Prostate gland (tissue), 2 donors: ENCODE measurements at regions of chr12 and their contacts with region 1.

Region 1: DNA sequence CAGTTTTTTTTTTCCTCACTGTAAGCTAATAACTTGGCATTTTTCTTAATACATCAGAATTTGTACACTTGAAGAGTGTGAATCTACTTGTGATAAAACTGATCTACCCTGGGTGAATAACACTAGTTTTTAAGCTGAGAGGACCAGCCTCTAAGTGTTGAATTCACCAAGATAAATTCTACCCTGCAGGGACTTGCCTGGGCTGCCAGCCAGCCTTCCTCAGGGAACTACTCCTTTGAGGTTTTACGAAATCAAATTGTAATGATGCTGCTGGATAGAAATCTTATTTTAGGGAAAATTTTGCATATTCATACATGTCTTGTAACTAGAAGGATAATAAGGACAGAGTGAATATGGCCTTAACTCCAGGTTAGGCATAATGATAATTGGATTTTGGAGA is 1.9 kb downstream of the MED21 start:
- DNase-seq: no peak
- H3K4me3 ChIP-seq: no peak overlapping the region
- H3K27ac ChIP-seq: no peak overlapping the region
- H3K4me1 ChIP-seq: no peaks in the 10 kb centered on the region
- H3K27me3 ChIP-seq: no peaks in the 10 kb centered on the region
- CTCF ChIP-seq: no peak
- POLR2A ChIP-seq: no peak

Region 2: DNA sequence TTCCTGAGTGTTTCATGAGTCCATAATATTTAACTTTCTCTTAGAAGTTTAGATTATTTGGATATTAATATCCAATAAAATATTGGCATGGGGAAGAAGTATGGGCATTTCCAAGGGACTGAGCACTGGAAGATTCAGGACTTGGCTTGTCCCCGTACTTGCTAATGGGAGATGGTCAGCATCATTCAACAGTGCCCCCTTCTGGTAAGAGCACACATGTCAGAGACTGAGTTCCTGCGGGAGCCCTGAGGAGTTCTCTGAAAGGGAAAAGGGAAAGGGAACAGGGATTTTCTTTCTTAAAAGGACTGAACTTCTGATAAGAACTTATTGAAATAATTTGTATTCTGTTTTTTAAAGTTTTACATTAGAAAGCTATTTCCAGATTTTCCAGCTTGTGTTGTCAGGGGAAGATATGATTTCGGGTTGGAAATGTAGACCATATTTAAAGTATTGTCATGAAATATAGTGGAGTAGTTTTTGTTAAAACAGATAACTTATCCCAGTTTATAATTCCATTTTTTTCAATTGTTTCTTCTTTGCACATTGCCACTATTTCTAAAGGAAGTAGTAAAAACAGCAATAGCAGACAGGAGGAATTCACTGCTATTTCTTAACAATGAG is 117.9 kb after region 1 on chr12:
- intact Hi-C with region 1: loop called (anchors 5 kb)
- DNase-seq: peak; percentile 55
- H3K4me3 ChIP-seq: no peak overlapping the region
- H3K27ac ChIP-seq: no peak overlapping the region
- H3K4me1 ChIP-seq: no peaks in the 10 kb centered on the region
- H3K27me3 ChIP-seq: no peaks in the 10 kb centered on the region
- CTCF ChIP-seq: peak; percentile 33 to 75 (median 60)
- POLR2A ChIP-seq: no peak

Region 3: GRCh38 chr12:27193854-27194544 is 169.7 kb after region 1 on chr12:
- intact Hi-C with region 1: loop called (anchors 5 kb)
- DNase-seq: peak; percentile 16
- H3K4me3 ChIP-seq: no peak overlapping the region
- H3K27ac ChIP-seq: peak overlapping the region; percentile 38
- H3K4me1 ChIP-seq: peaks cover 3% of the 10 kb centered on the region
- H3K27me3 ChIP-seq: no peaks in the 10 kb centered on the region
- CTCF ChIP-seq: peak in 1 of 4 experiments; percentile 9
- POLR2A ChIP-seq: no peak

Region 4: DNA sequence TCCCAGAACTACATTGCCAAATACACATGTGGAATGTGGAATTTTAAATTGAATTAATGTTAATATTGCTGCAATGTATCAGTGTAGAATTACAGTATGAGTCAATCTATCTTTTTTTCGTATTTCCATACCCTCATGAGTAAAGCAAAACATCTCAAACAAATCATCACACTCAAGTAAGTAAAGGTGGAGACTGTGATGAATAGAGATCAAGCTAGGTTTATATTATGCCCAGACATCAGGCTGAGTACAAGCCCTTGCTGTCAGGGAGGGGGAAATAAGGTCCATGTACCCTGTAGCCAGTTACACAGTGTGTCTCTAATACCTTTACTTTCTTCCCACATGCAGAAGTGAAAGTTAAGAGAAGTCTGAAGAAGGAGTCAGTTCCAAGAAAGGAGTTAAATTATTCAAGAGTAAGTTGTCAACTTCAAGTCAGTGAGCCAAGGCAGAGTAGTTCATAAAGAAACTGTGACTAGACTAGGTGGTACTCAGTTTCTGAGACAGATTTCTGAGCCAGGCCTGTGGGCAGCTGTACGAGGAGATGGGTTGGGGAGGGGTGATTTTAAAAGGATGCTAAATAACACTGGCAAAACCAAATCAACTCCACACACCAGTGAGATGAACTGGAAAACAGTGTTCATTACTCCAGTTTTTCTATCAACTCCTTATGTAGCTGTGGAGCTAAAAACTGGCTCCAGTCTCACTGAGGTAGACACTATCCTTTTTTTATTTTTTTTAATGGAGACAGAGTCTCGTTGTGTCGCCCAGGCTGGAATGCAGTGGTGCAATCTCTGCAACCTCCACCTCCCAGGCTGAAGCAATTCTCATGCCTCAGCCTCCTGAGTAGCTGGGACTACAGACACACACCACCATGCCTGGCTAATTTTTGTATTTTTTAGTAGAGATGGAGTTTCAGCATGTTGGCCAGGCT is 196.0 kb after region 1 on chr12:
- intact Hi-C with region 1: no loop called
- DNase-seq: no peak
- H3K4me3 ChIP-seq: no peak overlapping the region
- H3K27ac ChIP-seq: no peak overlapping the region
- H3K4me1 ChIP-seq: no peaks in the 10 kb centered on the region
- H3K27me3 ChIP-seq: no peaks in the 10 kb centered on the region
- CTCF ChIP-seq: no peak
- POLR2A ChIP-seq: no peak

Region 5: DNA sequence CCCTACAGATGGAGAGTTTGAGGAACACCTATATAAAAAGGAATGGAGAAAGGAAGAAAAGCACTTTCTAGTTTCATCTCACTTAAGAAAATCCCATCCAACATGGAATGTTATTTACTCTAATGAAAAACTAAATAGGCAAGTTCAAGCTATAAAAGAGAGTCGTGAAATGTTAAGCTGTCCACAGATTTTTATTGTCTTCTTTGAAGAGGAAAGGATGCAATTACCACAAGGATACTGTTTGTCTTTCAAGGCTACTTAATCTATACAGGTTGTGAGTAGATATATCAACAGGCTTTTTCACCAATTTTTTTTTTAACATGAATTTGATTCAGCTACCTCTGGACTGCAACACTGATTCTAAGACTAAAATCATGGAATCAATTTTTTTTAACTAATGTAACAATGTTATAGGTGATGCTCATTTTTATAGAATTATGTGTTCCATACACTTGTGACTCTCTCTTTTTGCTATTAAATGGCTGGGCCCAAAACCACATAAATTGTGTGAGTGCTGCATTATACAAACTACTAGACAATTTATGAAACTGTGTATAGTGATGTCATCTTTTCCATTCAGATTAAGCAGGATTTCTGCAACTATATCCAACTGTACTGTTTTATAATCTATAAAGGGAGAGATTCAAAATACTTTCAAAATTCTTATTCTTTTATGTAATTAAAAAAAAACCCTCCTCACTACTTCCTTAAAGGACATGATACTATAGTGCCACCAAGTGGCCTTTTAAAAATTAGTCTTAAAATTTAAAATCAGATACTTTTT is 281.6 kb after region 1 on chr12:
- intact Hi-C with region 1: loop called (anchors 5 kb)
- DNase-seq: no peak
- H3K4me3 ChIP-seq: no peak overlapping the region
- H3K27ac ChIP-seq: no peak overlapping the region
- H3K4me1 ChIP-seq: no peaks in the 10 kb centered on the region
- H3K27me3 ChIP-seq: no peaks in the 10 kb centered on the region
- CTCF ChIP-seq: peak in 3 of 4 experiments; percentile 50 to 55 (median 52)
- POLR2A ChIP-seq: no peak